ENCODE measurements at regions of chr6 and their contacts with region 1.

Region 1: GRCh38 chr6:3456755-3457466 is at the start of gene SLC22A23:
- DNase-seq: peak; percentile 60
- ATAC-seq: peak; percentile 85 to 89
- total RNA-seq, gene SLC22A23: 4.3 to 5.5 TPM

Region 2: GRCh38 chr6:3294921-3295871 is 161.7 kb before region 1 on chr6:
- intact Hi-C with region 1: loop called in 1 of 2 experiments (anchors 10 kb)
- DNase-seq: no peak
- ATAC-seq: peak in 1 of 2 donors; percentile 32

Measured in left cardiac atrium (tissue), 4 donors.